Activated naive CD4-positive, alpha-beta T cell treated with anti-CD3 and anti-CD28 coated beads for 36 hours (primary cell): ENCODE measurements at regions of chr1 and their contacts with region 1.

Region 1: DNA sequence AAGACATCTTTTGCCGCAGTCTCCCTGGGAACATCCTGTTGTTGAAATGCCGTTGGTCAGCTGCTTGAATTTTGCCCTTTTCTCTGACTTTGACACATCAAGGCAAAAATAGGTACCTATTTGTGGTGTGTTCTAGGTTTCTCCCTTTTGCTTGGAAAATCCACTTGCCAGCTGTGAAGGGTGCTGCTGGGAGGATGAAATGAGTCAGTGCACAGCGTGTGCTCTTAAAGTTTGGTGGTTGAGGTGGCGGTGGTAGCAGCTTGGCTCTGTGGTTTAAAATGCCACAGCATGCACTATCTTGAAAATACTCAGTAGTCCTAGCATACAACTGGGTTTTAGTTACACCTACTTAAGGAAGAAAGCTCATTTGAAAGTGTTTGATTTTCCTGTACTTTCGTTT is 183.8 kb downstream of the DHRS3 start:
- DNase-seq: peak; percentile 89
- H3K4me3 Mint-ChIP-seq: no peak overlapping the region
- H3K27ac Mint-ChIP-seq: peak overlapping the region; percentile 59
- H3K4me1 Mint-ChIP-seq: peaks cover 74% of the 10 kb centered on the region
- H3K27me3 Mint-ChIP-seq: no peaks in the 10 kb centered on the region

Region 2: DNA sequence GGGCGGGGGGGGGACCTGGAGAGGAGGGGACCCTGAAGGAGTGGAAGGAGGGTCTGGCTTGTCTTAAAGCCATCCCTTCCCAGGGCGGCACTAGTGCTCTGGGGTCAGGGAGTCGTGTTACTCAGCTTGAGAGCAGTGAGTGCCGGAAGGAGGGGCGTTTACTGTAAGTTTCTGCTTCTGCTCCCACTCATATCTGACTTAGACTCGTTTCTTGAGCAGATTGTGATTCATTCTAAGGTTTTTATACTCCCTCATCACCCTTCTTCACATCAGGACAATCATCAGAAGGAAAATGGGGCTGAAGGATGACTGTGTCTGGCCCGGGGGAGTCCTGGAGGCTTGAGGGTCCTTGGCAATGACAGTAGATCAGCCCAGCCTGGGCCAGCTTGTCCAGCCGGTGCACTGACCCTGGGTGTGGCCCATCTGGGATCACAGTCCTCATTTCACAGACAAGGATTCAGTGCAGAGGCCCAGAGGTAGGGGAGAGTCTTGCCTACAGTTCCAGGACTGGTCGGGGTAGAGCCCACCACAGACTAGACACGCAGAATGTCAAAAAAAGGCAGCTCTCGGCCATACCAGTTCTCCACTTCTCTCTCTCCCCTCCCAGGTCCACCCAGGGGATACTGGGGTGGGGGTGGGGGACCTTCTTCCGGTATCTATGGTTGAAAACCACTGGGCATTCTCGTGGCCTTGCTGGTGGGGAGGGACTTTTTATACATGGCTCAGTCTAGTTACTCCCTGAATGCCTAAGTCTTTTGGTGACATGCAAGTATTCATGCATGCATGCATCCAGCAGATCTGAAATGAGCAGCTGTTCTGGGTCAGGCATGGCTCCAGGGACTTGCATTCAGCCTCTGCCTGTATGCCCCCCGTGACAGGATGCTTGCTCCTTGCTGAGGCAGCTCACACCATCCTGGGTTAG is 366.0 kb before region 1 on chr1:
- CTCF ChIA-PET with region 1: no interaction called
- intact Hi-C with region 1: loop called (anchors 10 kb)
- DNase-seq: peak; percentile 89
- H3K4me3 Mint-ChIP-seq: peak overlapping the region; percentile 53
- H3K27ac Mint-ChIP-seq: peak overlapping the region; percentile 92
- H3K4me1 Mint-ChIP-seq: peaks cover 52% of the 10 kb centered on the region
- H3K27me3 Mint-ChIP-seq: peaks cover 31% of the 10 kb centered on the region

Region 3: GRCh38 chr1:12296623-12297022 is 137.6 kb before region 1 on chr1:
- CTCF ChIA-PET with region 1: interaction called, 3 read pairs
- intact Hi-C with region 1: loop called (anchors 1 kb)
- DNase-seq: no peak
- H3K4me3 Mint-ChIP-seq: no peak overlapping the region
- H3K27ac Mint-ChIP-seq: peak overlapping the region; percentile 51
- H3K4me1 Mint-ChIP-seq: peaks cover 30% of the 10 kb centered on the region
- H3K27me3 Mint-ChIP-seq: no peaks in the 10 kb centered on the region

Region 4: GRCh38 chr1:12407050-12407961 is 26.9 kb before region 1 on chr1:
- CTCF ChIA-PET with region 1: no interaction called
- intact Hi-C with region 1: loop called (anchors 2 kb)
- DNase-seq: peak; percentile 46
- H3K4me3 Mint-ChIP-seq: no peak overlapping the region
- H3K27ac Mint-ChIP-seq: no peak overlapping the region
- H3K4me1 Mint-ChIP-seq: peaks cover 38% of the 10 kb centered on the region
- H3K27me3 Mint-ChIP-seq: no peaks in the 10 kb centered on the region

Region 5: GRCh38 chr1:12467570-12468286 is 33.6 kb after region 1 on chr1:
- CTCF ChIA-PET with region 1: interaction called, 5 read pairs
- intact Hi-C with region 1: loop called (anchors 1 kb)
- DNase-seq: no peak
- H3K4me3 Mint-ChIP-seq: no peak overlapping the region
- H3K27ac Mint-ChIP-seq: peak overlapping the region; percentile 86
- H3K4me1 Mint-ChIP-seq: peaks cover 57% of the 10 kb centered on the region
- H3K27me3 Mint-ChIP-seq: no peaks in the 10 kb centered on the region

Region 6: DNA sequence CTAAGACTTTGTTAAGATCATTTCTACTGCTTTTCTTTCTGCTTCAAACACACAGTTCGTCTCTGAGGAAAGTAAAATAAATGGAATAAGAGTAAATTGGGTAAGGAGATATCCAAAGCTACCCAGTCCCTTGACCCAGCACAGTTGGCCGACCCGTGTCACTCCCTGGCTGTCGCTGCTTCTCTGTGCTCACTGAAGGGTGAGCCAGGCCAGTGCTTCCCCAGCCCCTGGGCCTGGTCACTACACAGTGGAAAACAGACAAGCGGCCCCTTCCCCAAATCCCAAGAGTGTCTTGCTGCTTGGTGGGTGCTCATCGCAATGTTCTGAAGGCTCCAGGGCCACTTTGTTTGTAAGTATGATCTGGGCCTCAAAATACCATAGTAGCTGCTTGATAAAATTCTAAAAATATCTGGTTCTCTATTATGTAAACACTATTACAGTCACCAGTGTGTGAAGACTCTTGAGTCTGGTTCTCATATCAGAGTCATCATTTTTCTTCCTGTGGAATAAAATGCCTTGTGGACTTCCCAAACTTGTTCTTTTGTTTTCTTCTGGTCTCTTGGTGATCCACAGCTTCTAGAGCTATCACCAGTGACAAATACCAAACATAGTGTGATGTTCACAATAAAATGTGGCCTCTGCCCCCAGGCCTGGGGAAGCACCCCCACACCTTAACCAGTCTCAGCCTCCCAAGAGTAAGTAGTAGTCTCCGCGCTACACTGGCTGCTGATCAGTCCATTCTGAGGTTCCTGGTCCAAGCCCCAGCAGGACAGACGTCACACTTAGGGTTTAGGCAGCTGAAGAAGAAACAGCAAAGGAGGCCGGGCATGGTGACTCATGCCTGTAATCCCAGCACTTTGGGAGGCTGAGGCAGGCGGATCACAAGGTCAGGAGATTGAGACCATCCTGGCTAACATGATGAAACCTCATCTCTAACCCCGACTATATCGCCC is 77.6 kb after region 1 on chr1:
- CTCF ChIA-PET with region 1: no interaction called
- intact Hi-C with region 1: loop called (anchors 1 kb)
- DNase-seq: no peak
- H3K4me3 Mint-ChIP-seq: peak overlapping the region; percentile 80
- H3K27ac Mint-ChIP-seq: peak overlapping the region; percentile 97
- H3K4me1 Mint-ChIP-seq: peaks cover 61% of the 10 kb centered on the region
- H3K27me3 Mint-ChIP-seq: no peaks in the 10 kb centered on the region